ENCODE measurements at regions of chr16 and their contacts with region 1.

Region 1: GRCh38 chr16:83447560-83447959 is 360.2 kb upstream of the HSBP1 start:
- DNase-seq: no peak
- H3K4me3 ChIP-seq: no peak overlapping the region
- H3K27ac ChIP-seq: no peak overlapping the region
- H3K4me1 ChIP-seq: no peaks in the 10 kb centered on the region
- H3K27me3 ChIP-seq: no peaks in the 10 kb centered on the region
- CTCF ChIP-seq: no peak
- EP300 ChIP-seq: no peak
- POLR2A ChIP-seq: no peak
- RAD21 ChIP-seq: no peak

Region 2: GRCh38 chr16:83344014-83344413 is 103.5 kb before region 1 on chr16:
- CTCF ChIA-PET with region 1: no interaction called
- POLR2A ChIA-PET with region 1: no interaction called
- DNase-seq: no peak
- H3K4me3 ChIP-seq: no peak overlapping the region
- H3K27ac ChIP-seq: no peak overlapping the region
- H3K4me1 ChIP-seq: peaks cover 0 to 3% (median 1%) of the 10 kb centered on the region in 4 experiments; a peak in 2 of 7 replicates
- H3K27me3 ChIP-seq: no peaks in the 10 kb centered on the region
- CTCF ChIP-seq: no peak
- EP300 ChIP-seq: no peak
- POLR2A ChIP-seq: no peak
- RAD21 ChIP-seq: no peak

Region 3: GRCh38 chr16:83356266-83356665 is 91.3 kb before region 1 on chr16:
- CTCF ChIA-PET with region 1: interaction called, 12 read pairs
- POLR2A ChIA-PET with region 1: no interaction called
- DNase-seq: no peak
- H3K4me3 ChIP-seq: no peak overlapping the region
- H3K27ac ChIP-seq: no peak overlapping the region
- H3K4me1 ChIP-seq: no peaks in the 10 kb centered on the region
- H3K27me3 ChIP-seq: no peaks in the 10 kb centered on the region
- CTCF ChIP-seq: peak; percentile 5 to 85 (median 69)
- EP300 ChIP-seq: no peak
- POLR2A ChIP-seq: no peak
- RAD21 ChIP-seq: peak; percentile 68 to 81

Region 4: GRCh38 chr16:83409347-83409746 is 38.2 kb before region 1 on chr16:
- CTCF ChIA-PET with region 1: no interaction called
- POLR2A ChIA-PET with region 1: no interaction called
- DNase-seq: no peak
- H3K4me3 ChIP-seq: no peak overlapping the region
- H3K27ac ChIP-seq: no peak overlapping the region
- H3K4me1 ChIP-seq: no peaks in the 10 kb centered on the region
- H3K27me3 ChIP-seq: no peaks in the 10 kb centered on the region; a peak in 1 of 7 replicates
- CTCF ChIP-seq: no peak
- EP300 ChIP-seq: no peak
- POLR2A ChIP-seq: no peak
- RAD21 ChIP-seq: no peak

Region 5: DNA sequence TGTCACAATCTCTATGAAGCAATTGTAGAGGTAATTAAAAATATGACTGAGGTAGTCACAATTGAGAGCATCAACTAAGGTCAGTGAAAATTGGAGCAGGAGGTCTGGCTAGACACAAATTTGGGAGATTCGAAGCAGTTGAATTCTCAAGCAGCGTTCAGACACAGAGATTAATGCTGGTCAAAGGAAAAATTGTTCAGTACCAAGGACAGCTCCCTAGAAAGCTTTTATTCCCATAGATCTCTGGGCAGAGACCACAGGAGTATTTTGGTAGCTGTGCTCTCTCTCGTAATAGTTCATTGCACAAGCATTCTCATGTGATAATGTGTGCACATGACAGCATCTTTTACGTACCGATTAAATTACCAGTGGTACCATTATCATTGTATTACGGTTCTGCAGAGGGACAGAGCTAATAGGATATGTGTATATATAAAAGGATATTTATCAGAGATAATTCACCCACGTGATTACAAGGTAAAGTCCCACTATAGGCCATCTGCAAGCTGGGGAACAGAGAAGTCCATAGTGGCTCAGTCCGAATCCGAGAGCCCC is 27.3 kb before region 1 on chr16:
- CTCF ChIA-PET with region 1: interaction called, 10 read pairs
- POLR2A ChIA-PET with region 1: no interaction called
- DNase-seq: no peak
- H3K4me3 ChIP-seq: no peak overlapping the region
- H3K27ac ChIP-seq: no peak overlapping the region
- H3K4me1 ChIP-seq: no peaks in the 10 kb centered on the region
- H3K27me3 ChIP-seq: no peaks in the 10 kb centered on the region; a peak in 1 of 7 replicates
- CTCF ChIP-seq: no peak
- EP300 ChIP-seq: no peak
- POLR2A ChIP-seq: no peak
- RAD21 ChIP-seq: no peak

Region 6: GRCh38 chr16:83433201-83433600 is 14.4 kb before region 1 on chr16:
- CTCF ChIA-PET with region 1: interaction called, 12 read pairs
- POLR2A ChIA-PET with region 1: no interaction called
- DNase-seq: no peak
- H3K4me3 ChIP-seq: no peak overlapping the region
- H3K27ac ChIP-seq: no peak overlapping the region
- H3K4me1 ChIP-seq: no peaks in the 10 kb centered on the region
- H3K27me3 ChIP-seq: 0 out of 7 replicates have a peak, but pooled peaks cover 0 to 2% (median 0%) of the 10 kb centered on the region in 4 experiments
- CTCF ChIP-seq: no peak
- EP300 ChIP-seq: no peak
- POLR2A ChIP-seq: no peak
- RAD21 ChIP-seq: no peak

Region 7: GRCh38 chr16:83458612-83459011 is 11.1 kb after region 1 on chr16:
- CTCF ChIA-PET with region 1: interaction called, 18 read pairs
- POLR2A ChIA-PET with region 1: no interaction called
- DNase-seq: no peak
- H3K4me3 ChIP-seq: no peak overlapping the region
- H3K27ac ChIP-seq: no peak overlapping the region
- H3K4me1 ChIP-seq: no peaks in the 10 kb centered on the region
- H3K27me3 ChIP-seq: no peaks in the 10 kb centered on the region
- CTCF ChIP-seq: no peak
- EP300 ChIP-seq: no peak
- POLR2A ChIP-seq: no peak
- RAD21 ChIP-seq: no peak